GM12878 (cell line): ENCODE measurements at regions of chr1 and their contacts with region 1.

Region 1: DNA sequence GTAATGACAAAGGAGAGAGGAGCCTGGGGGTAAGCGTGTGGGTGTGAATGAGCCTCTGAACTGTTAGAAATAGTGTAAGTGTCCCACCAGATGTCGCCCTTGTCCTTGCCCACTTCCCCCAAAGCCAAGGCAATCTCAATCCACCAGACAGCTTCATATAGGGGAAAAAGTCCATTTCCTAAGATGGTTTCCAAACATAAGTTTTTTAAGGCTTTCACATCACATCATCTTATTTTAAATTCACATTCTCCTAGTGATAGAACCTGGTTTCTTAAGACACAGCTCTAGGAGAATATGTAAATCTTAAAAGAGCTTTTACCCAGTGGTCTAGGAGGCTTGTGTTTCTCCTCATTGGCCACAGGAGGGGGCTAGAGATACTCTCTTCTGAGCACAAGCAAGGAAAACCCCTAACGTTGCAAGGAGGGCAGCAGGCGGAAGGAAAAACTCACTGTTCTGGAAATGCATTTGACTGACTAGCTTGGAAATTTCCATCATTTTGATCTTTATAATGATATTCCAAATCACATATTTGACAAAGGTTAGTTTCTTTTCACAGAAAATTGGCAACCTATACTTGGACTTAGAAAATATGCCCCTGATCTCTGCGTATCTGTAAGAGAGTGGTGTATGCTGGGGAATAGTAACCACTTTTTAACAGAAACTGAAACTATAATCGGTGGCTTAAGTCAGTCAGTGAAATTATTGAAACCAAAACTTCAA is 51.9 kb upstream of the LPAR3 start:
- DNase-seq: peak; percentile 81
- ATAC-seq: peak; percentile 91
- H3K4me3 ChIP-seq: no peak overlapping the region
- H3K27ac ChIP-seq: peak overlapping the region; percentile 67
- H3K4me1 ChIP-seq: peaks cover 20% of the 10 kb centered on the region
- H3K27me3 ChIP-seq: no peaks in the 10 kb centered on the region
- CTCF ChIP-seq: peak; percentile 78 to 86 (median 84)
- EP300 ChIP-seq: 0 out of 4 replicates have a peak, but pooled peaks of 1 of the 2 experiments have one; percentile 3
- POLR2A ChIP-seq: no peak
- RAD21 ChIP-seq: peak; percentile 92

Region 2: GRCh38 chr1:84763912-84764663 is 180.8 kb before region 1 on chr1:
- CTCF ChIA-PET with region 1: no interaction called
- POLR2A ChIA-PET with region 1: no interaction called
- RAD21 ChIA-PET with region 1: no interaction called
- SMC1A ChIA-PET with region 1: no interaction called
- in situ Hi-C with region 1: no loop called
- intact Hi-C with region 1: no loop called
- DNase-seq: no peak
- ATAC-seq: no peak
- H3K4me3 ChIP-seq: no peak overlapping the region
- H3K27ac ChIP-seq: no peak overlapping the region
- H3K4me1 ChIP-seq: no peaks in the 10 kb centered on the region
- H3K27me3 ChIP-seq: peaks cover 2 to 6% of the 10 kb centered on the region in 2 experiments; a peak in 3 of 4 replicates
- CTCF ChIP-seq: no peak
- EP300 ChIP-seq: no peak
- POLR2A ChIP-seq: no peak
- RAD21 ChIP-seq: no peak

Region 3: DNA sequence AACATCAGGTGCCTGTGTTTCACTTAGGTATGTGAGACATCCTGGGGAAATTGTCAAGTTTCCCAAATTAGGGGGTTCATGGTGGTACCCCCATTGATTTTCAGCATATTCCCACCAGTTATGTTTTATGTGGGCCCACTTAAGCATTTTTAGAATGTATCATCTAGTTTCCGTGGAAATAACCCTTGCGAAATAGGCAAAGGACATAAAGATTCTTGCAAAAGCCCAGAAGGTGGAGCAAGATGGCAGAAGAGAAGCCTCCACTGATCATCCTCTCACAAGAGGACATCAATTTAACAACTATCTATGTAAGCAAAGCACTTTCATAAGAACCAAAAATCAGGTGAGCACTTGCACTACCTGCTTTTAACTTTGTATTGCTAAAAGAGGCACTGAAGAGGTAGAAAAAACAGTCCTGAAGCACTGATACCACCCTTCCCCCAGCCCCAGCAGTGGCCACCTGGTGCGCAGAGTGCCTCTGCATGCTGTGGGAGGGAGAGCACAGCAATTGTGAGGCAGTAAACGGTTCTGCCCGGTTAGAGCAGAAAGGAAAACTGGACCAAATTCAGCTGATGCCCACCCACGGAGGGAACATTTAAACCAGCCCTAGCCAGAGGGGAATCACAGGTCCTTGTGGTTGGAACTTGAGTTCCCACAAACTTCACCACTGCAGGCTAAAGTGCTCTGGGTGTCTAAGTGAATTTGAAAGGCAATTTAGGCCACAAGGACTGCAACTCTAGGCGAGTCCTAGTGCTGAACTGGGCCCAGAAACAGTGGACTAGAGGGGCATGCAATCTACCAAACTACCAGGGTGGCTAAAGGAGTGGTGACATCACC is 28.8 kb after region 1 on chr1:
- CTCF ChIA-PET with region 1: interaction called, 36 read pairs
- POLR2A ChIA-PET with region 1: interaction called, 3 read pairs
- RAD21 ChIA-PET with region 1: interaction called, 18 read pairs
- SMC1A ChIA-PET with region 1: interaction called, 50 read pairs
- in situ Hi-C with region 1: no loop called
- intact Hi-C with region 1: loop called (anchors 1 kb)
- DNase-seq: no peak
- ATAC-seq: peak; percentile 54
- H3K4me3 ChIP-seq: peak overlapping the region; percentile 60
- H3K27ac ChIP-seq: peak overlapping the region; percentile 85
- H3K4me1 ChIP-seq: peaks cover 56% of the 10 kb centered on the region
- H3K27me3 ChIP-seq: no peaks in the 10 kb centered on the region
- CTCF ChIP-seq: peak in 1 of 3 experiments; percentile 31; a peak in 2 of 6 replicates
- EP300 ChIP-seq: no peak
- POLR2A ChIP-seq: no peak
- RAD21 ChIP-seq: peak; percentile 41; the same call in 1 of the 2 replicates

Region 4: GRCh38 chr1:84996846-84997666 is 52.1 kb after region 1 on chr1 and contains the start of gene MCOLN2:
- CTCF ChIA-PET with region 1: interaction called, 33 read pairs
- POLR2A ChIA-PET with region 1: interaction called, 6 read pairs
- RAD21 ChIA-PET with region 1: interaction called, 38 read pairs
- SMC1A ChIA-PET with region 1: interaction called, 45 read pairs
- in situ Hi-C with region 1: no loop called
- intact Hi-C with region 1: loop called (anchors 1 kb)
- DNase-seq: no peak
- ATAC-seq: peak; percentile 71
- H3K4me3 ChIP-seq: peak within 1 kb of the TSS; percentile 95
- H3K27ac ChIP-seq: peak within 1 kb of the TSS; percentile 99
- H3K4me1 ChIP-seq: 0 out of 2 replicates have a peak, but pooled peaks cover 4% of the 10 kb centered on the region
- H3K27me3 ChIP-seq: no peaks in the 10 kb centered on the region
- CTCF ChIP-seq: 0 out of 6 replicates have a peak, but pooled peaks of 1 of the 3 experiments have one; percentile 4
- EP300 ChIP-seq: no peak
- POLR2A ChIP-seq: peak; percentile 86
- RAD21 ChIP-seq: no peak
- polyA plus RNA-seq, gene MCOLN2: 25.9 to 46.7 TPM

Region 5: GRCh38 chr1:85033221-85033620 is 88.3 kb after region 1 on chr1:
- CTCF ChIA-PET with region 1: interaction called, 319 read pairs
- POLR2A ChIA-PET with region 1: interaction called, 18 read pairs
- RAD21 ChIA-PET with region 1: interaction called, 209 read pairs
- SMC1A ChIA-PET with region 1: interaction called, 214 read pairs
- in situ Hi-C with region 1: loop called (anchors 5 kb)
- intact Hi-C with region 1: no loop called
- DNase-seq: no peak
- ATAC-seq: no peak
- H3K4me3 ChIP-seq: no peak overlapping the region
- H3K27ac ChIP-seq: no peak overlapping the region
- H3K4me1 ChIP-seq: no peaks in the 10 kb centered on the region
- H3K27me3 ChIP-seq: no peaks in the 10 kb centered on the region
- CTCF ChIP-seq: no peak
- EP300 ChIP-seq: no peak
- POLR2A ChIP-seq: no peak
- RAD21 ChIP-seq: no peak

Region 6: GRCh38 chr1:85259118-85259911 is 314.4 kb after region 1 on chr1 and contains the start of gene C1orf52:
- CTCF ChIA-PET with region 1: interaction called, 147 read pairs
- POLR2A ChIA-PET with region 1: interaction called, 12 read pairs
- RAD21 ChIA-PET with region 1: interaction called, 33 read pairs
- SMC1A ChIA-PET with region 1: interaction called, 31 read pairs
- in situ Hi-C with region 1: loop called (anchors 5 kb)
- intact Hi-C with region 1: loop called (anchors 1 kb)
- DNase-seq: no peak
- ATAC-seq: peak; percentile 96
- H3K4me3 ChIP-seq: peak within 1 kb of the TSS; percentile 99
- H3K27ac ChIP-seq: peak within 1 kb of the TSS; percentile 69
- H3K4me1 ChIP-seq: no peaks in the 10 kb centered on the region
- H3K27me3 ChIP-seq: no peaks in the 10 kb centered on the region
- CTCF ChIP-seq: peak; percentile 90 to 98 (median 95)
- EP300 ChIP-seq: no peak
- POLR2A ChIP-seq: peak; percentile 98
- RAD21 ChIP-seq: peak; percentile 62
- polyA plus RNA-seq, gene C1orf52: 9.4 to 17.1 TPM

Region 7: GRCh38 chr1:85276215-85276977 is 331.5 kb after region 1 on chr1 and contains the start of gene BCL10:
- CTCF ChIA-PET with region 1: interaction called, 15 read pairs
- POLR2A ChIA-PET with region 1: no interaction called
- RAD21 ChIA-PET with region 1: interaction called, 20 read pairs
- SMC1A ChIA-PET with region 1: interaction called, 3 read pairs
- in situ Hi-C with region 1: no loop called
- intact Hi-C with region 1: no loop called
- DNase-seq: peak; percentile 97
- ATAC-seq: peak; percentile 97
- H3K4me3 ChIP-seq: peak within 1 kb of the TSS; percentile 87
- H3K27ac ChIP-seq: peak within 1 kb of the TSS; percentile 94
- H3K4me1 ChIP-seq: peaks cover 4% of the 10 kb centered on the region
- H3K27me3 ChIP-seq: no peaks in the 10 kb centered on the region
- CTCF ChIP-seq: no peak
- EP300 ChIP-seq: no peak
- POLR2A ChIP-seq: peak; percentile 83
- RAD21 ChIP-seq: no peak
- polyA plus RNA-seq, gene BCL10: 16.7 to 19.0 TPM